ENCODE measurements at regions of chr11 and their contacts with region 1.

Region 1: GRCh38 chr11:129331871-129332274 is 43.8 kb upstream of the BARX2 start:
- DNase-seq: peak; percentile 62
- CTCF ChIP-seq: peak; percentile 83

Region 2: DNA sequence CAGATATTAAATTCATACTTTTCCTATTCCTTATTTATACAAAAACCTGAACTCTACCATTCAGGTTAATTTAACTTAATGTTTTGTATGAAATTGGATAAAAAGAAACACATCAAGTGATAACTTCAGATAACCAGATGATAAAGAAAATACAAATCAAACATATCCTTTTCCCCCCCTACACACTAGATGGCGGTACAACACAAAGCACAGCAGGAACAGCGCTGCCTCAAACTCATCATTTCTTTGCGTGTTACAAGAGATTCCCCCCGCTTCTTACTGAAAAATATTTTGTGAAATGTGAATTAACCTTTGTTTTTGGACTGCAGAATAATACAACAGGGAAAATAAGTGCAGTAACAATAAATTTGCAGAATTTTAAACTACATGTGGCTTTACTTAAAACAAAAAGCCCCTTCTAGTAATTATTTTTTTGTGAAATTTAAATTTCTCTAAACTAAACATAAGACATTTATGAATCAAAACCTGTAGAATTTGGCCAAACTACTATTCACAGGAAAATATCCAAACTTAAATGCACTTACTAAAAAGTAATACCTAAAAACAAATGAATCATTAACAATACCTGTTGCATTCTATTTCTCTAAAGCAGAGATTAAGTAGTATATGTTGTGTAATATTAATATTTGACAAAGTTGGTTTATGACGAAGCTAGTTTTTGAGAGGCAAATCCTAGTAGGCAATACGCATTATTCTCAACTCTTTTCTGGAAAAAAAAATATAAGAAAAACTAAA is 214.1 kb before region 1 on chr11:
- CTCF ChIA-PET with region 1: interaction called, 19 read pairs
- POLR2A ChIA-PET with region 1: no interaction called
- DNase-seq: peak; percentile 15
- CTCF ChIP-seq: peak; percentile 73

Region 3: DNA sequence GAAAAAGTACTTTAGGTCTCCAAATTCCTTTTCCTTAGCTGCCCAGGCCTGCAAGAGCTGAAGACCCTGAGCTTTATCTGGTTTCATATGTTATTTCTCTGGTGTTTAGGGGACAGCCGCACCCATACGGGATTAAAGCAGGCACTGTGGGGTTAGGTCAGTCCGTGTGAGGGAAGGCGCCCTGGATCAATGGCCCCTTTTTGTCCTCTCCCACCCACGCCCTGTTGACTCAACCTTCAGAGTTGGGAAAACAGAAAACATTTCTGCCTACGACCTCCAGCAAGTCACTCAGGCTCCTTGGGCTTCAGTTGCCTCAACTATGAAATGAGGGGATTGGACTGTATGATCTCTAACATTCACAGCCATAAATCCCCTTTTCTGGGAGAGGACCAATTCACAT is 11.4 kb before region 1 on chr11:
- CTCF ChIA-PET with region 1: interaction called, 17 read pairs
- POLR2A ChIA-PET with region 1: no interaction called
- DNase-seq: no peak
- CTCF ChIP-seq: no peak